GM12878 (cell line): ENCODE measurements at regions of chrX and their contacts with region 1.

Region 1: DNA sequence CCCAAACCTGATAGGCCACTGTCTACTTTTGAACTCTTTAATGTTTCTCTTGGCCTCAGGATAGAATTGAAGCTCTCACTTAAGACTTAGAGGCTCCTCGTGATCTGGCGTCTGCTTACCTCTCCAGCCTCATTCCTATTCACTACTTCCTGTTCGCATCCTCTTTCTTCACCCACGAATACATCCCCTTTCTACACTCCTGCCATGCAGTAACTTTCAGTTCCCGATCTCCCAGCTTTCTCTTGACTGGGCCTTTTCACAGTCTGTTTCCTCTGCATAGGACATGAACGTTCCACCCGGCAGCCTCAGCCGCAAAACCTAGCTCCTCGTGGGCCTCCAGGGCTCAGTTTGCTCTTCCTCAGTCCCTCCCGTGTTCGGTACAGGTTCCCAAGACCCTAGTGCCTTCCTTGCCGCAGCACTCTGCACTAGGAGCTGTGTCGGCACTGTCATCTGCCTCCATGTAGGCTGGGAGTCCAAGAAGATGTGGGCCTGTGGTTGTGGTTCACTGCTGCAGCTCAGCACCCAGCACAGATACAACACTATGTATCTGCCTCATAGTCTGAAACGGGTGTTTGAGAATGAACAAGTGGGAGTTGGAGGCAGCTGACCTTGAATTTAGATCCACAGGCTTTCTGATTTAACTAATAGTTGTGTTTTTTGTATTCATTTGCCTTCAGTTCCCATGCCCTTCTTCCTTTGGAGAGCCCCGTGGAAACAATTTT is 15.8 kb downstream of the RPL39 start:
- DNase-seq: no peak
- ATAC-seq: peak; percentile 69
- H3K4me3 ChIP-seq: no peak overlapping the region
- H3K27ac ChIP-seq: peak overlapping the region; percentile 83
- H3K4me1 ChIP-seq: peaks cover 5% of the 10 kb centered on the region
- H3K27me3 ChIP-seq: no peaks in the 10 kb centered on the region
- CTCF ChIP-seq: no peak
- EP300 ChIP-seq: no peak
- POLR2A ChIP-seq: 0 out of 2 replicates have a peak, but pooled peaks have one; percentile 38
- RAD21 ChIP-seq: no peak

Region 2: DNA sequence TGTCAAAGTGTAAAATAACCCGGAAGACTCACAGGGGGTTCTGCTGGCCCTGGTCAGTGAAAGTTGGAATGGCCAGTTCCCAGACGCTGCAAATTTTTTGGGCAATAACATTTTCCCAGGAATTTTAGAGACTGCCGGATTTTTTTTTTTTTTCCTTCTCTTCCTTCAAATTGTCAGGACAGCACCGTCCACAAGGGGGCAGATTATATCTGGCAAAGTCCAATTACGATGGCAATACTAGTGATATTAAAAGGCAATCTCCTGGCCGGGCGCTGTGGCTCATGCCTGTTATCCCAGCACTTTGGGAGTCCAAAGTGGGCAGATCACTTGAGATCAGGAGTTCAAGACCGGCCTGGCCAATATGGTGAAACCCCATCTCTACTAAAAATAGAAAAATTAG is 286.9 kb before region 1 on chrX:
- CTCF ChIA-PET with region 1: interaction called, 3 read pairs
- POLR2A ChIA-PET with region 1: no interaction called
- RAD21 ChIA-PET with region 1: no interaction called
- SMC1A ChIA-PET with region 1: no interaction called
- in situ Hi-C with region 1: no loop called
- intact Hi-C with region 1: loop called (anchors 5 kb)
- DNase-seq: no peak
- ATAC-seq: peak; percentile 64
- H3K4me3 ChIP-seq: no peak overlapping the region
- H3K27ac ChIP-seq: no peak overlapping the region
- H3K4me1 ChIP-seq: no peaks in the 10 kb centered on the region
- H3K27me3 ChIP-seq: no peaks in the 10 kb centered on the region
- CTCF ChIP-seq: peak; percentile 50 to 60 (median 58)
- EP300 ChIP-seq: no peak
- POLR2A ChIP-seq: no peak
- RAD21 ChIP-seq: peak; percentile 51; the same call in 1 of the 2 replicates

Region 3: DNA sequence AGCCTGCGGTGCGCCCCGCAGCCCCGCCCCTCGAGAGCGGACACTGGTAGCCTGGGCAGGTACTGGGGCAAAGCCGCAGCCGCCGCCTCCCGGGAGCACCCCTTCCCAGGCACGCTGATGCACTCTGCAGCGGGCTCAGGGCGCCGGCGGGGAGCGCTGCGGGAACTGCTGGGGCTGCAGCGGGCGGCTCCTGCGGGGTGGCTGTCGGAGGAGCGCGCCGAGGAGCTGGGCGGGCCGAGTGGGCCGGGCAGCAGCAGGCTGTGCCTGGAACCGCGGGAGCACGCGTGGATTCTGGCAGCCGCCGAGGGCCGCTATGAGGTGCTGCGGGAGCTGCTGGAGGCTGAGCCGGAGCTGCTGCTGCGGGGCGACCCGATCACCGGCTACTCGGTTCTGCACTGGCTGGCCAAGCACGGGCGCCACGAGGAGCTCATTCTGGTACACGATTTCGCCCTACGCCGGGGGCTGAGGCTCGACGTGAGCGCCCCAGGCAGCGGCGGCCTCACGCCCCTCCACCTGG is 16.9 kb before region 1 on chrX:
- CTCF ChIA-PET with region 1: interaction called, 47 read pairs
- POLR2A ChIA-PET with region 1: interaction called, 25 read pairs
- RAD21 ChIA-PET with region 1: interaction called, 128 read pairs
- SMC1A ChIA-PET with region 1: interaction called, 61 read pairs
- in situ Hi-C with region 1: no loop called
- intact Hi-C with region 1: loop called (anchors 1 kb)
- DNase-seq: no peak
- ATAC-seq: peak; percentile 9
- H3K4me3 ChIP-seq: peak overlapping the region; percentile 64
- H3K27ac ChIP-seq: no peak overlapping the region
- H3K4me1 ChIP-seq: peaks cover 44% of the 10 kb centered on the region
- H3K27me3 ChIP-seq: no peaks in the 10 kb centered on the region
- CTCF ChIP-seq: no peak
- EP300 ChIP-seq: no peak
- POLR2A ChIP-seq: no peak
- RAD21 ChIP-seq: no peak

Region 4: GRCh38 chrX:119763836-119764387 is 11.8 kb before region 1 on chrX:
- CTCF ChIA-PET with region 1: interaction called, 22 read pairs
- POLR2A ChIA-PET with region 1: interaction called, 25 read pairs
- RAD21 ChIA-PET with region 1: interaction called, 128 read pairs
- SMC1A ChIA-PET with region 1: interaction called, 61 read pairs
- in situ Hi-C with region 1: no loop called
- intact Hi-C with region 1: no loop called
- DNase-seq: no peak
- ATAC-seq: peak; percentile 28
- H3K4me3 ChIP-seq: no peak overlapping the region
- H3K27ac ChIP-seq: no peak overlapping the region
- H3K4me1 ChIP-seq: peaks cover 13% of the 10 kb centered on the region
- H3K27me3 ChIP-seq: no peaks in the 10 kb centered on the region
- CTCF ChIP-seq: no peak
- EP300 ChIP-seq: no peak
- POLR2A ChIP-seq: no peak
- RAD21 ChIP-seq: no peak